ENCODE measurements at regions of chr2 and their contacts with region 1.

Region 1: GRCh38 chr2:117994729-117995128 is 19.1 kb downstream of the CCDC93 start:
- DNase-seq: no peak
- H3K4me3 ChIP-seq: no peak overlapping the region
- H3K27ac ChIP-seq: no peak overlapping the region
- H3K4me1 ChIP-seq: no peaks in the 10 kb centered on the region
- CTCF ChIP-seq: no peak

Region 2: DNA sequence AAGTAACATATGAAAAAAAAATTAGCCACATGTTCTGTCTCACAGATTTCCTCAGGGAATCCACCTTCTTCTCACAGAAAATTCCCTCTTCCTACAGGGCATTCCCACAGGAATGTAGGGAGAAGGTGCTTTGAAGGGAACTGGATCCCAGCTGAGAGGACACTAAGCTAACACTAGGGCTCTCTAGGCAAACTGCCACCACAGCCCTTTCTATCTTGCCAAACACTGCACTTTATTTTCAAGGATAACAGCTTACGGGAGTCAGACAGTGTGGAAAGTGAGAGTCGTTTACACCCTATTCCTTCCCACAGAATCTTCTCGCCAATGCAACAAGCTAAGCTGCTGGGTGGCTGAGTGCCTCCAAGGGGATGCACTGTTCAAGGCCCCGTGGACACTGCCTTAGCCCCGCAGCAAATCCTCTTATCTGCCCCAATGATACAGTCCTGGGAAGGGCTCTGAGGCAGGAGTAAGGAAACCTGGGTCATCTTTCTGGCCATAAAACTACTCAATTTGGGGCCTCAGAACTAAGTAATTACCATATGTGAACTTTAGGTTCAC is 57.8 kb before region 1 on chr2:
- CTCF ChIA-PET with region 1: no interaction called
- POLR2A ChIA-PET with region 1: no interaction called
- intact Hi-C with region 1: loop called (anchors 5 kb)
- DNase-seq: no peak
- H3K4me3 ChIP-seq: no peak overlapping the region
- H3K27ac ChIP-seq: no peak overlapping the region
- H3K4me1 ChIP-seq: no peaks in the 10 kb centered on the region
- CTCF ChIP-seq: no peak

Region 3: DNA sequence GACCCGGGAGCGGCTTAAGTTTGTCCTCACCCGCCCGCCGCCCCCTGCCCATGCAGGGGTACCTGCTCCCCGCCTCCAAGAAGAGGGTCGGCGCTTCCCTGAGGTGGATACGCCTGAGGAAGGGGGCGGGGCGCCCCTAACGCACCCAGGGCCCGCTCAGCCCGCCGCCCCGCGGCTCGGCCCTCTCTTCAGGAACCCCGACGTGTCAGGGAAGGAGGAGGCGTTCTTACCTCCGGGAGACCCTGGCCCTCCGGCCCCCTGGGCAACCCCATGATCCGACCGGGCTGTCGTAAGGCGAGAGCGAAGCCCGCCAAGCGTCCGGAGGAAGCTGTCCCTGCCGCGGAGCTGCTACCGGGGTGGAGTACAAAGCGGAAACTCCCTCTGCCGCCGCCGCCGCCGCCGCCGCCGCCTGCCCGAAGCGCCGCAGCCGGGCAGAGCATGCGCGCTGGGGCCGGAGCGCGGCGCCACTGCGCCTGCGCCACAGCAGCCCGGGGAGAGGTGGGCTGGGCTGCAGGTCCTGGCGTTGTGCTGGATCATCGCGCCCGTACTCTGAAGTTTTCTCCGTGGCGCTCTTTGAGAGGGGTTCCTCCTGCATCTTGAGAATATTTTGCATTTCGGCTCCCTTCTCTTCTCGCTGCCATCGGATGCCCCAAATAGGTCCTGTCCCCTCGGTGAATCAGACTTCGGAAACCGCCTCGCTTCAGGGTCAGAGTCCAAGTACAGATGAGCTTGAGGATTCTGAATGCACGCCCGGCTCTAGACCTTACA is 19.2 kb after region 1 on chr2 and contains the start of gene CCDC93:
- CTCF ChIA-PET with region 1: no interaction called
- POLR2A ChIA-PET with region 1: interaction called, 10 read pairs
- intact Hi-C with region 1: no loop called
- DNase-seq: peak; percentile 87
- H3K4me3 ChIP-seq: peak within 1 kb of the TSS; percentile 100
- H3K27ac ChIP-seq: peak within 1 kb of the TSS; percentile 58
- H3K4me1 ChIP-seq: peaks cover 25% of the 10 kb centered on the region
- CTCF ChIP-seq: no peak
- total RNA-seq, gene CCDC93: 25.6 and 28.2 TPM in 2 replicates

Region 4: DNA sequence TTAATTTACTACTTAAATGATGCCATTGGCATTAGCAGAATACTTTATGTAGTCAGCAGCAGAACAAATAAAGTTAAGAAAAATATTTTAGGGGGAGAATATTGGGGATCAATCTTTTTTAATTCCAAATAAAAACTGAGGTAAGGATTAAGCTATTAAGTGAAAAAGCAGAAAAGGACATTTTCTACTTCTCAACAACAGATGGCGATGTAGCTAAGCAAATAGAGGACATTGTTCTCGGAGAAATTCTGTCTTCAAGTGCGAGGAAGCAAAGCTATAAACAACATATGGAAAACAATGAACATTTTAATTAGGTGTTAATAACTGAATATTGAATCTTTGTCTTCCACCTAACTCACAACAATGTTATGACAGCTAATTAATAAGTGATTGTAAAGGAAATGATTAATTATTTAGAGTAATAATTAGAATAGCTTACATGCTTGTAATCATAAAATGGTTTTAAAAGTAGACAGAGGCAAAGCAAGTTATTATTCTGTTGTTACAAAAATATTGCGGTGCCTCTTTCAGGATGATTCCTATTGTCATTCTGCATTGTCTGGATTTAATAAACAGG is 52.0 kb after region 1 on chr2:
- CTCF ChIA-PET with region 1: no interaction called
- POLR2A ChIA-PET with region 1: no interaction called
- intact Hi-C with region 1: no loop called
- DNase-seq: peak; percentile 70
- H3K4me3 ChIP-seq: no peak overlapping the region
- H3K27ac ChIP-seq: no peak overlapping the region
- H3K4me1 ChIP-seq: peaks cover 42% of the 10 kb centered on the region
- CTCF ChIP-seq: peak; percentile 96

Region 5: DNA sequence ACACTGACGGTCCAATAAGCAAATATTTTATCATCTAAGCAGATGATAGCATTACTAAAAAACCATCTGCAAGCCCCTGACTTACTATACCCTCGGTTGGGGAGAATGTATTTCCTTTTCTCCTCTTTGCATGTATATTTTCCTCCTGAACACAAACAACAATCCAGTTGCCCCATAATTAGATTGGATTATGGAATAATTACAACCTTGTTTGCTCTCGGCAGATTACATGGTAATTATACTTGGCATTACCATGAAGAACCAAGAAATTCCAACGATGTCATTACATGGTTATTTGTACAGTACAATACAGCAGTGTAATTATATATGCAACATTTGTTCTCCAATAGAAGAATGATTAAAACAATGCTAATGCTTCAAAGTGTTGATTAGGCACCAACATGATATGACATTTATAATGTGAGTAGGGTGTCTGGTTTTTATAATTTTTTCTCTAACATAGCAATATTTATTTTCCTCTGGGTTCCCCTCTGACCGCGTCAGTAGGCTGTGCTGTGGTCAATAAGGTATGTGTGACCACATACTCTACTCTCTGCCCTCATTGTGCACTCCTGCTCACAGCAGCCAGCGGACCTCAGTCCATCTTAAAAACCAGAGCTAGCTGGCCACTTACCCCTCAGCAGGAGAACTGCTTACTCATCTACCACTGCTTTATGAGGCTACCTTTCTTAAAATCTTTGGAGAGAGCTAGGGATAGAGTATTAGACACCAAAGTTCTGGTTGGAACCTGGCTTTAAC is 269.7 kb after region 1 on chr2:
- CTCF ChIA-PET with region 1: no interaction called
- POLR2A ChIA-PET with region 1: no interaction called
- intact Hi-C with region 1: no loop called
- DNase-seq: no peak
- H3K4me3 ChIP-seq: no peak overlapping the region
- H3K27ac ChIP-seq: no peak overlapping the region
- H3K4me1 ChIP-seq: no peaks in the 10 kb centered on the region
- CTCF ChIP-seq: no peak

Measured in OCI-LY7 (cell line).